Mammary epithelial cell (primary cell): ENCODE measurements at regions of chr3 and their contacts with region 1.

Region 1: DNA sequence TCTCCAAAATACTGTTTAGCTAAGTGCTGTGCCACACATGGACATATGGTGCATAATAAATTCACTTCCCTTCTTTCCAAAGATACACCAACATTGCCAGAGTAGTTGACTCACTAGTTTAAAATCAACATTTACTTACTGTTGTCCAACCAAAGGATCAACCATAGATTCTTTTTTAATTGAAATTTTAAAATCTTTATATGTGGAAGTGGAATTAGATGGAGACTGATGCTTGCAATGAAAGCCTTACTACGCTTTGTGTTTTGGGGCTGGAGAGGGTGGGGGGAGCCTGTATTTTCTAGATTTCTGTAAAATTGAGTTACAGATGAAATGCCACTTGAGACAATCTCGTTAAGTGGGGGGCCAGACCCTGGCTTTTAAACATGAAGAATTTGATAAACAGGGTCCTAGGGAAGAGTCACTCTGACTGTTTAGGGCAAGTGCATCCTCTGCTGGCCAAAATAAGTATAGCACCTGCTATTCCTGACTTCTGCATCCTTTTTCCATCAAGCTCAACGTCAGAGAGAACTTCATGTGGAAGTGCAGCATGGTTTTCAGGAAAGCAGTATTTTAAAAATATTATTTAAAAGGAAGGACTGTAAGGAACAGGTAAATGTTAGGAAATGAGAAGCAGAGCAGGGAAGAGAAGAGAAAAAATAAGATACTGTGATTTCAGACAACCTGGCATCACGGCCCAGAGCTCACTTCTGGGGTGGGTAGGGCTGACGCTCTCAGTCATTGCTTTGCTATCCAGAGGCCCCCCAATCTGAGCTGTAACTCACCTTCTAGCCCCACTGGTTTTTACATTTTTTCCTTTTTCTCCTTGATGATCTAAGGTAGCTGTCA is 76.7 kb downstream of the BOC start:
- DNase-seq: peak; percentile 44
- H3K4me3 ChIP-seq: no peak overlapping the region
- H3K27ac ChIP-seq: peak overlapping the region; percentile 56
- H3K4me1 ChIP-seq: peaks cover 29% of the 10 kb centered on the region
- H3K27me3 ChIP-seq: no peaks in the 10 kb centered on the region
- CTCF ChIP-seq: peak; percentile 100

Region 2: GRCh38 chr3:112546216-112546759 is 741.7 kb before region 1 on chr3:
- CTCF ChIA-PET with region 1: no interaction called
- dilution Hi-C with region 1: no loop called
- in situ Hi-C with region 1: no loop called
- intact Hi-C with region 1: no loop called
- DNase-seq: peak; percentile 75
- H3K4me3 ChIP-seq: no peak overlapping the region
- H3K27ac ChIP-seq: peak overlapping the region; percentile 61
- H3K4me1 ChIP-seq: peaks cover 23% of the 10 kb centered on the region
- H3K27me3 ChIP-seq: no peaks in the 10 kb centered on the region
- CTCF ChIP-seq: no peak

Region 3: GRCh38 chr3:113051302-113051711 is 236.7 kb before region 1 on chr3:
- CTCF ChIA-PET with region 1: no interaction called
- dilution Hi-C with region 1: no loop called
- in situ Hi-C with region 1: loop called (anchors 5 to 10 kb)
- intact Hi-C with region 1: loop called (anchors 1 kb)
- DNase-seq: peak; percentile 64
- H3K4me3 ChIP-seq: no peak overlapping the region
- H3K27ac ChIP-seq: no peak overlapping the region
- H3K4me1 ChIP-seq: peaks cover 18% of the 10 kb centered on the region
- H3K27me3 ChIP-seq: no peaks in the 10 kb centered on the region
- CTCF ChIP-seq: peak; percentile 79 to 82

Region 4: DNA sequence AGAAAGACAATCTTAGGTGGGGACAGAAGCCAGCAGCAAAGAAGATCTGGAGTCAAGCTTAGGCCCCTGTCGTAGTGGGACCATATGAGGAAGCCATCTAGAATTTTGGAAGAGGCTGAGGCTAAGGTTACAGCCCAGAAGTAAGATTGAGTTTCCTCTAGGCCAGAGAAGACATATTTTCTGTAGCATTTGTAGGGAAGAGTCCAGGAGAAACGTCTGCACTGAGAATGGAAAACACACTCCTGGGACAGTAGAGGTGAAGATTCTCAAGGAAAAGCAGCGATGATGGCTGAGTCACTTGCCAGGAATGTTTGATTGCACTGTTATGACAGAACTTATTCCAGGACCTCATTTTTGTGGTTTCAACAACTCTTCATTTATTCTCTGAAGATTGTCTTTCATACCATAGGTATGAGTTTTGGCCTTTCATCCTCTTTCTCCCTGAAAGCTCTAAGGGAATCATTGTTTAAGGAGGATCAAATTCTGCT is 190.0 kb before region 1 on chr3:
- CTCF ChIA-PET with region 1: no interaction called
- dilution Hi-C with region 1: no loop called
- in situ Hi-C with region 1: no loop called
- intact Hi-C with region 1: loop called (anchors 1 kb)
- DNase-seq: peak; percentile 79
- H3K4me3 ChIP-seq: no peak overlapping the region
- H3K27ac ChIP-seq: no peak overlapping the region
- H3K4me1 ChIP-seq: peaks cover 24% of the 10 kb centered on the region
- H3K27me3 ChIP-seq: no peaks in the 10 kb centered on the region
- CTCF ChIP-seq: no peak

Region 5: DNA sequence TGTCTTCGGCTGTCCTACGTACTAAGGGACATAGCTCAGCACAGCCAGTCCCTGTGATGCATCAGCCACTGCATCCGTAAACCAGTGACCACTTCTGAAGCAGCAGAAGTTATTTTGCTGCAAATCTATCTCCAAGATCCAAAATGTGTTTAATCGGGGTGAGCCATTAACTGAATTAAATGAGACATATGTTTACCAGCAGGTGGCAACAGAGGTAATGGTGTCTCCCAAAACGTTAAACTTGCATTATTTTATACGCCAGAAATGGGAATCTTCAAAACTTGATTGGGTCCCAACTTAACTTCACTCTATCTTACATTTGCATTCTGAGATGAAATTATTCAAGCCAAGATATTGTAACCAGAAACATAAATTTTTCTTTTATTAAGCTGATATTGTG is 152.0 kb before region 1 on chr3:
- CTCF ChIA-PET with region 1: no interaction called
- dilution Hi-C with region 1: no loop called
- in situ Hi-C with region 1: loop called in 1 of 2 experiments (anchors 5 kb)
- intact Hi-C with region 1: loop called (anchors 1 kb)
- DNase-seq: peak; percentile 17
- H3K4me3 ChIP-seq: no peak overlapping the region
- H3K27ac ChIP-seq: no peak overlapping the region
- H3K4me1 ChIP-seq: peaks cover 8% of the 10 kb centered on the region
- H3K27me3 ChIP-seq: no peaks in the 10 kb centered on the region
- CTCF ChIP-seq: peak; percentile 47 to 61

Region 6: GRCh38 chr3:113249111-113249510 is 38.9 kb before region 1 on chr3:
- CTCF ChIA-PET with region 1: no interaction called
- dilution Hi-C with region 1: no loop called
- in situ Hi-C with region 1: no loop called
- intact Hi-C with region 1: loop called (anchors 5 kb)
- DNase-seq: peak; percentile 84
- H3K4me3 ChIP-seq: no peak overlapping the region
- H3K27ac ChIP-seq: peak overlapping the region; percentile 69
- H3K4me1 ChIP-seq: peaks cover 33% of the 10 kb centered on the region
- H3K27me3 ChIP-seq: no peaks in the 10 kb centered on the region
- CTCF ChIP-seq: no peak

Region 7: DNA sequence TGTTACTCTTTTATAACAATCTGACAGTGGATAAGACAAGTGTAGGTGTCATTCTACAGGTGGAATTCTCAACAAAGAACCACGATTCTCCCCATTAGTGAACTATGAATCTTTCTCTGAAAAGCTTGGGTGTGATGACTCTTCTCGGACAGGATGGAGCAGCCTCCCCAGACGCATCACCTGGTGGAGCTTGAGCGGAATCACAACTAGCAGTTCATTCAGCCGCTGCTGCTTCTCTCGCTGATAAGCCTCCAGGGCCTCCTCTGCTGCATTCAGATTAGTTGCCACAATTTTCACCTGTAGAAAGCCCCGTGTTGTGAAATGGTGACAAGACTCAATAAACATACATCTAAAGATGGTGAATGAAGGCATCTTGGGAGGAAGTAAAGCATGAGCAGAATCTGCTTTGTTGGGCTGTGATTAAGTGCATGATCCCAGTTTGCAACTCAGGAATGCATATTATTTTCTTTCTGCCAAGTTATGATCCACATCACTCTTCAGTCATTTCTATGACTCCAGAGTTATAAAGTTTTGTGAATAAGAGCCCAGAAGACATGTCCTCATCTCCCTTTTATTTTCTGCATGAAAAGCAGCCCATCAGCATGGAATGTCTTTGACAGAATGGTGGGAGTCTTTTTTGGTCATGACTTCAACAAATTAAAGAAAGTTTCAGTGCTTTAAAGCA is 17.0 kb after region 1 on chr3:
- CTCF ChIA-PET with region 1: no interaction called
- dilution Hi-C with region 1: no loop called
- in situ Hi-C with region 1: no loop called
- intact Hi-C with region 1: no loop called
- DNase-seq: no peak
- H3K4me3 ChIP-seq: no peak overlapping the region
- H3K27ac ChIP-seq: no peak overlapping the region
- H3K4me1 ChIP-seq: no peaks in the 10 kb centered on the region
- H3K27me3 ChIP-seq: no peaks in the 10 kb centered on the region
- CTCF ChIP-seq: no peak

Region 8: GRCh38 chr3:113575206-113575605 is 287.2 kb after region 1 on chr3:
- CTCF ChIA-PET with region 1: interaction called, 3 read pairs
- dilution Hi-C with region 1: no loop called
- in situ Hi-C with region 1: no loop called
- intact Hi-C with region 1: loop called (anchors 1 kb)
- DNase-seq: no peak
- H3K4me3 ChIP-seq: no peak overlapping the region
- H3K27ac ChIP-seq: no peak overlapping the region
- H3K4me1 ChIP-seq: no peaks in the 10 kb centered on the region
- H3K27me3 ChIP-seq: peaks cover 2% of the 10 kb centered on the region
- CTCF ChIP-seq: no peak